ENCODE measurements at regions of chr4 and their contacts with region 1.

Region 1: GRCh38 chr4:118835571-118836300 is at the start of gene SEC24D:
- DNase-seq: peak; percentile 87
- ATAC-seq: peak; percentile 90
- H3K4me3 ChIP-seq: peak within 1 kb of the TSS; percentile 93
- H3K27ac ChIP-seq: peak within 1 kb of the TSS; percentile 99
- H3K4me1 ChIP-seq: peaks cover 5% of the 10 kb centered on the region
- H3K27me3 ChIP-seq: no peaks in the 10 kb centered on the region
- CTCF ChIP-seq: 0 out of 2 replicates have a peak, but pooled peaks have one; percentile 12
- POLR2A ChIP-seq: peak; percentile 92
- RAD21 ChIP-seq: no peak
- total RNA-seq, gene SEC24D: 93.2 and 98.9 TPM in 2 replicates

Region 2: GRCh38 chr4:118816538-118817177 is 19.1 kb before region 1 on chr4:
- CTCF ChIA-PET with region 1: no interaction called
- POLR2A ChIA-PET with region 1: interaction called, 4 read pairs
- dilution Hi-C with region 1: no loop called
- in situ Hi-C with region 1: no loop called
- intact Hi-C with region 1: loop called (anchors 2 kb)
- DNase-seq: peak; percentile 75
- ATAC-seq: peak; percentile 87
- H3K4me3 ChIP-seq: no peak overlapping the region
- H3K27ac ChIP-seq: no peak overlapping the region
- H3K4me1 ChIP-seq: peaks cover 20% of the 10 kb centered on the region
- H3K27me3 ChIP-seq: no peaks in the 10 kb centered on the region
- CTCF ChIP-seq: no peak
- POLR2A ChIP-seq: no peak
- RAD21 ChIP-seq: no peak